A549 (cell line): ENCODE measurements at regions of chr20 and their contacts with region 1.

Region 1: GRCh38 chr20:37282556-37282955 is 6.9 kb upstream of the MANBAL start:
- DNase-seq: peak in 1 of 2 experiments; percentile 79
- ATAC-seq: peak; percentile 83 to 86
- H3K4me3 ChIP-seq: no peak overlapping the region
- H3K27ac ChIP-seq: peak overlapping the region; percentile 20 to 73; a peak in 5 of 6 replicates
- H3K4me1 ChIP-seq: peaks cover 8% of the 10 kb centered on the region; the same call in 2 of the 3 replicates
- CTCF ChIP-seq: peak; percentile 57
- EP300 ChIP-seq: no peak
- POLR2A ChIP-seq: no peak
- RAD21 ChIP-seq: peak; percentile 73 to 88

Region 2: GRCh38 chr20:37243076-37243936 is 39.2 kb before region 1 on chr20:
- CTCF ChIA-PET with region 1: no interaction called
- POLR2A ChIA-PET with region 1: no interaction called
- DNase-seq: peak in 1 of 2 experiments; percentile 10
- ATAC-seq: peak in 1 of 2 experiments; percentile 60; a peak in 3 of 6 replicates
- H3K4me3 ChIP-seq: no peak overlapping the region
- H3K27ac ChIP-seq: no peak overlapping the region
- H3K4me1 ChIP-seq: no peaks in the 10 kb centered on the region
- CTCF ChIP-seq: no peak
- EP300 ChIP-seq: no peak
- POLR2A ChIP-seq: no peak
- RAD21 ChIP-seq: no peak

Region 3: DNA sequence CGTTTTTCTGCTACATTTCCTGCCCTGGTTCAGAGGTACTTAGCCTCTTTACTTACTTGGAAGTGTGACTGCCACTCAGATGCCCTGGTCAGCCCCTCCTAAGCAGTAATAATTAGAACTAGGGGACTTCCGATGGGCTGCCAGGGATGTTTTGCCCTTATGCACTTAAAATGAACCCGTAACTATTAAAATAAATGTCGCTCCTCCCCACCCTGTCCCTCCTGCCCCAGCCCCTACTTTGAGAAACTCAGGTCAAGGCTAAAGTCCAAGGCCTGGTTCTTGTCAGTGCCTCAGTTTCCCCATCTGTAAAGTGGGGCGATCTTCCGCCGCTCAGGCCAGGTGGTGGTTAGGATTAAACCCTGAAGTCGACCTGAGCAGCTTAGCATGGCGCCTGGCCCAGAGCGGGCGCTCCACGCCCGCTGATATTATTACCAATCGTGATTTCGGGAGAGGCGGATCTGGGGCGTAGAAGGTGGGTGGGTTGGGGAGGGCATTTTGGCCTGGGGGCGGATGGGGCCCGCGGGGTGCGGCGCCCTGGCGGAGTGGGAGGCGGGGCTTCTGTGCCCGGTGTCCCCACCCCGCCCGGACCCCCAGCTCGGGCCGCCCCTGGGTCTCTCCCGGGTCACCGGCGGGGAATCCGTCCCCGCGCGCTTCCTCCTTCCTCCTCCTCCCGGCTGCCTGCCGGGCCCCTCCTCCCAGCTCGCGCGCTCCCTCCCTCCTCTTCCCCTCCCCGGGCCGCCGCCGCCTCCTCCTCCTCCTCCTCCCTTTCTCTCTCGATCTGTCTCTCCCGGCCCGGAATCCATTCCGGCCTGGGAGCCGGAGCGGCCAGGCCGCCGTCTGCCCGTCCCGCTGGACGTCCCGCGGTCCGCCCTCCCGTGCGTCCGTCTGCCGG is 63.0 kb after region 1 on chr20 and contains the start of gene SRC:
- CTCF ChIA-PET with region 1: interaction called, 11 read pairs
- POLR2A ChIA-PET with region 1: no interaction called
- DNase-seq: peak; percentile 68 to 83
- ATAC-seq: peak; percentile 54 to 70
- H3K4me3 ChIP-seq: peak within 1 kb of the TSS; percentile 89
- H3K27ac ChIP-seq: peak within 1 kb of the TSS; percentile 99 to 100
- H3K4me1 ChIP-seq: peaks cover 68% of the 10 kb centered on the region
- CTCF ChIP-seq: no peak
- EP300 ChIP-seq: no peak
- POLR2A ChIP-seq: peak; percentile 80
- RAD21 ChIP-seq: no peak; a peak in 2 of 5 replicates
- polyA plus RNA-seq, gene SRC: 154 and 212 TPM in 2 replicates

Region 4: GRCh38 chr20:37392421-37393178 is 110.0 kb after region 1 on chr20:
- CTCF ChIA-PET with region 1: interaction called, 10 read pairs
- POLR2A ChIA-PET with region 1: interaction called, 3 read pairs
- DNase-seq: peak in 1 of 2 experiments; percentile 84
- ATAC-seq: peak; percentile 11 to 25; a peak in 3 of 6 replicates
- H3K4me3 ChIP-seq: no peak overlapping the region
- H3K27ac ChIP-seq: peak overlapping the region; percentile 69 to 84; a peak in 5 of 6 replicates
- H3K4me1 ChIP-seq: peaks cover 93% of the 10 kb centered on the region
- CTCF ChIP-seq: peak; percentile 35; the same call in 2 of the 3 replicates
- EP300 ChIP-seq: no peak
- POLR2A ChIP-seq: no peak
- RAD21 ChIP-seq: peak; percentile 16 to 30; a peak in 2 of 5 replicates

Region 5: GRCh38 chr20:37449276-37449675 is 166.7 kb after region 1 on chr20:
- CTCF ChIA-PET with region 1: no interaction called
- POLR2A ChIA-PET with region 1: no interaction called
- DNase-seq: no peak
- ATAC-seq: no peak
- H3K4me3 ChIP-seq: no peak overlapping the region
- H3K27ac ChIP-seq: no peak overlapping the region
- H3K4me1 ChIP-seq: no peaks in the 10 kb centered on the region
- CTCF ChIP-seq: no peak
- EP300 ChIP-seq: no peak
- POLR2A ChIP-seq: no peak
- RAD21 ChIP-seq: no peak